IMR-90 (cell line): ENCODE measurements at regions of chr10 and their contacts with region 1.

Region 1: DNA sequence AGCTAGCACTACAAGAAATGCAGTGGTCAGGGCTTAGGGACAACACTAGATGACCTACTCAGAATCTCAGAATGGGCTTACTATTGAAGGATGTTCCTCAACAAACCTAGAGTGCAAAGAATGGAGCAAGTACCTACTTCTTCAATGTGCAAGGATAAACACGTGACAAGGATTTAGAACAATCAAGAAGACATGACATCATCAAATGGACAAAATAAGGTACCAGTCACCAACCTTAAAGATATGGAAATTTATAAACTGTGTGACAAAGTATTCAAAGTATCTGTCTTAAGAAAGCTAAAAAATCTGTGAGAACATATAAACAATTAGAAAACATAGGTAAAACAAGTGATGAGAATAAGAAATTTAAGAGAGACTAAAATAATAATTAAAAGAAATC is 656.1 kb downstream of the ZWINT start:
- DNase-seq: no peak
- ATAC-seq: no peak
- H3K4me3 ChIP-seq: no peak overlapping the region
- H3K27ac ChIP-seq: no peak overlapping the region
- H3K4me1 ChIP-seq: no peaks in the 10 kb centered on the region
- H3K27me3 ChIP-seq: no peaks in the 10 kb centered on the region
- CTCF ChIP-seq: no peak
- POLR2A ChIP-seq: no peak
- RAD21 ChIP-seq: no peak

Region 2: GRCh38 chr10:54800741-54801421 is 904.1 kb before region 1 on chr10 and contains the start of gene PCDH15:
- CTCF ChIA-PET with region 1: no interaction called
- POLR2A ChIA-PET with region 1: no interaction called
- dilution Hi-C with region 1: no loop called
- in situ Hi-C with region 1: no loop called
- intact Hi-C with region 1: no loop called
- DNase-seq: no peak
- ATAC-seq: no peak
- H3K4me3 ChIP-seq: no peak within 1 kb of the TSS
- H3K27ac ChIP-seq: no peak within 1 kb of the TSS
- H3K4me1 ChIP-seq: no peaks in the 10 kb centered on the region
- H3K27me3 ChIP-seq: no peaks in the 10 kb centered on the region
- CTCF ChIP-seq: no peak
- POLR2A ChIP-seq: no peak
- RAD21 ChIP-seq: no peak
- total RNA-seq, gene PCDH15: not detected in 2 replicates

Region 3: GRCh38 chr10:54833029-54833428 is 871.9 kb before region 1 on chr10:
- CTCF ChIA-PET with region 1: no interaction called
- POLR2A ChIA-PET with region 1: no interaction called
- dilution Hi-C with region 1: no loop called
- in situ Hi-C with region 1: no loop called
- intact Hi-C with region 1: no loop called
- DNase-seq: no peak
- ATAC-seq: no peak
- H3K4me3 ChIP-seq: no peak overlapping the region
- H3K27ac ChIP-seq: no peak overlapping the region
- H3K4me1 ChIP-seq: no peaks in the 10 kb centered on the region
- H3K27me3 ChIP-seq: no peaks in the 10 kb centered on the region
- CTCF ChIP-seq: no peak
- POLR2A ChIP-seq: no peak
- RAD21 ChIP-seq: no peak

Region 4: DNA sequence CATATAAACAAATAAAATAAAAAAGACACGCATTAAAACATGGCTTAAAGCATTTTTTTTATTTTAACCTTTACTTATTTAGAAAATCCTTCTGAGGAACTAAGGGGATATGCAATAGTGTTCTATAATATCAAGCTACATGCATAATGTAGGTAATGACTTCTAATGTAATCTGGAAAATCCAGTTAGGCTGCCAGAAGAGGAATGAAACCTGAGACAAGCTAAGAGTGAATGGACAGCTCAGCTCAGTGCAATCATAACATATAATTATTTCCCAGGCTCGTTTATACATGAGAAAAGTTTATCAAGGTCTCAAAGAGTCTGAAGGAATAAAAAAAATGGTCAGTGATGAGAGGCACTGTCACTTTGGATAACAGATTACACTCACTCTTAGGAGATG is 255.0 kb before region 1 on chr10:
- CTCF ChIA-PET with region 1: no interaction called
- POLR2A ChIA-PET with region 1: no interaction called
- dilution Hi-C with region 1: no loop called
- in situ Hi-C with region 1: no loop called
- intact Hi-C with region 1: no loop called
- DNase-seq: no peak
- ATAC-seq: no peak
- H3K4me3 ChIP-seq: no peak overlapping the region
- H3K27ac ChIP-seq: no peak overlapping the region
- H3K4me1 ChIP-seq: no peaks in the 10 kb centered on the region
- H3K27me3 ChIP-seq: no peaks in the 10 kb centered on the region
- CTCF ChIP-seq: no peak
- POLR2A ChIP-seq: no peak
- RAD21 ChIP-seq: no peak

Region 5: GRCh38 chr10:55766212-55766611 is 61.3 kb after region 1 on chr10:
- CTCF ChIA-PET with region 1: no interaction called
- POLR2A ChIA-PET with region 1: no interaction called
- dilution Hi-C with region 1: no loop called
- in situ Hi-C with region 1: no loop called
- intact Hi-C with region 1: loop called (anchors 2 kb)
- DNase-seq: no peak
- ATAC-seq: no peak
- H3K4me3 ChIP-seq: no peak overlapping the region
- H3K27ac ChIP-seq: no peak overlapping the region
- H3K4me1 ChIP-seq: no peaks in the 10 kb centered on the region
- H3K27me3 ChIP-seq: no peaks in the 10 kb centered on the region
- CTCF ChIP-seq: no peak
- POLR2A ChIP-seq: no peak
- RAD21 ChIP-seq: no peak